ENCODE measurements at regions of chr4 and their contacts with region 1.

Region 1: GRCh38 chr4:38132107-38132673 is 172.0 kb downstream of the PTTG2 start:
- DNase-seq: peak; percentile 89
- H3K4me3 ChIP-seq: no peak overlapping the region
- H3K27ac ChIP-seq: peak overlapping the region; percentile 66 to 85 (median 74)
- H3K4me1 ChIP-seq: peaks cover 0 to 63% (median 58%) of the 10 kb centered on the region in 4 donors
- H3K27me3 ChIP-seq: no peaks in the 10 kb centered on the region
- CTCF ChIP-seq: no peak
- EP300 ChIP-seq: peak in 3 of 4 donors; percentile 36 to 86 (median 37)
- POLR2A ChIP-seq: no peak

Region 2: GRCh38 chr4:38082424-38083385 is 49.5 kb before region 1 on chr4:
- intact Hi-C with region 1: loop called (anchors 5 kb)
- DNase-seq: no peak
- H3K4me3 ChIP-seq: no peak overlapping the region
- H3K27ac ChIP-seq: peak overlapping the region; percentile 46 to 84 (median 70)
- H3K4me1 ChIP-seq: peaks cover 4 to 99% (median 88%) of the 10 kb centered on the region in 4 donors
- H3K27me3 ChIP-seq: no peaks in the 10 kb centered on the region
- CTCF ChIP-seq: no peak
- EP300 ChIP-seq: no peak
- POLR2A ChIP-seq: no peak

Measured in sigmoid colon (tissue), 7 donors.